ENCODE measurements at regions of chr3 and their contacts with region 1.

Region 1: GRCh38 chr3:2041931-2042330 is 56.7 kb upstream of the CNTN4 start:
- DNase-seq: no peak
- ATAC-seq: no peak
- H3K4me3 ChIP-seq: no peak overlapping the region
- H3K27ac ChIP-seq: no peak overlapping the region
- H3K4me1 ChIP-seq: no peaks in the 10 kb centered on the region
- H3K27me3 ChIP-seq: no peaks in the 10 kb centered on the region
- CTCF ChIP-seq: no peak

Region 2: DNA sequence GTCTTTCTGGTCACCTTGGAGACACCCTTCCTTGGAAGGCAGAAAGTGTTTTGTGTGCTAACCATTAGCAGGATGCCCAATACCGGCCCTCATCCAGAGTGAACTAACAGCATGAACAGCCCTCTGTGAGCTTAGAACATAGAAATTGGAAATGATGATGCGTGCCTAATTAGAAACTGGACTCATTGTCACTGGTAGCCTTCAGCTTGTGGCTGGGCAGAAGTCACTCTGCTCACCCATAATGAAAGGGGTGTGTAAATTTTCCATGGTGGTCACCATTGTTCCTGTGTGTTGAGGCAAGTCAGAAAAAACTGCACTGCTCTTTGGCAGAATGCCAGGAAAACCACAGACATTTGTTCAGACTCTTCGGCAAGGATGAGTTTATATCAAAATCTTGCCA is 18.0 kb before region 1 on chr3:
- intact Hi-C with region 1: loop called in 1 of 10 experiments (anchors 1 kb)
- DNase-seq: no peak
- ATAC-seq: no peak
- H3K4me3 ChIP-seq: no peak overlapping the region
- H3K27ac ChIP-seq: no peak overlapping the region
- H3K4me1 ChIP-seq: no peaks in the 10 kb centered on the region
- H3K27me3 ChIP-seq: peaks cover 0 to 3% (median 0%) of the 10 kb centered on the region in 7 donors
- CTCF ChIP-seq: no peak

Region 3: DNA sequence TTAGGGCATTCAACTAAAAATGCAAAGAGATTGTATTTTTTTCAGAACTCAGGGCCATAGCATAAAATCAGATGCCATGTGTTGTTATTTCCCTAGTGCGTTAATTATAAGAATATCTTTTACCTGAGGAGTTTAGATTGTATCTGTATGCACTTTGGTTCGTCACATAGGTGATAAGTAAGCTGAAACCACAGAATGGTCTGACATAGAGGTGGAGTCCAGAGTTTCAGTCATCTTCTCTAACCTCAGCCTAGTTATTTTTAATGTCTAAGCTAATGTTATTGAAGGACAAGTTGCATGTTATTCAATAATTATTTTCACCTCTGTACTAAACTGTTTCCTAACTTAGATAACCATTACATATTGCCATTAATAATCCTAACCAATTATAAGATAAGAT is 29.6 kb after region 1 on chr3:
- intact Hi-C with region 1: no loop called
- DNase-seq: no peak
- ATAC-seq: no peak
- H3K4me3 ChIP-seq: no peak overlapping the region
- H3K27ac ChIP-seq: no peak overlapping the region
- H3K4me1 ChIP-seq: no peaks in the 10 kb centered on the region
- H3K27me3 ChIP-seq: peaks cover 0 to 4% (median 0%) of the 10 kb centered on the region in 7 donors
- CTCF ChIP-seq: no peak